Left cardiac atrium (tissue), 4 donors: ENCODE measurements at regions of chr1 and their contacts with region 1.

Region 1: GRCh38 chr1:65419681-65420589 is 533 bp upstream of the LEPR start:
- DNase-seq: peak; percentile 98
- ATAC-seq: peak; percentile 94 to 98

Region 2: GRCh38 chr1:65059930-65060538 is 359.9 kb before region 1 on chr1:
- intact Hi-C with region 1: loop called in 1 of 2 experiments (anchors 10 kb)
- DNase-seq: no peak
- ATAC-seq: peak; percentile 29 to 60